B cell (primary cell): ENCODE measurements at regions of chr2 and their contacts with region 1.

Region 1: DNA sequence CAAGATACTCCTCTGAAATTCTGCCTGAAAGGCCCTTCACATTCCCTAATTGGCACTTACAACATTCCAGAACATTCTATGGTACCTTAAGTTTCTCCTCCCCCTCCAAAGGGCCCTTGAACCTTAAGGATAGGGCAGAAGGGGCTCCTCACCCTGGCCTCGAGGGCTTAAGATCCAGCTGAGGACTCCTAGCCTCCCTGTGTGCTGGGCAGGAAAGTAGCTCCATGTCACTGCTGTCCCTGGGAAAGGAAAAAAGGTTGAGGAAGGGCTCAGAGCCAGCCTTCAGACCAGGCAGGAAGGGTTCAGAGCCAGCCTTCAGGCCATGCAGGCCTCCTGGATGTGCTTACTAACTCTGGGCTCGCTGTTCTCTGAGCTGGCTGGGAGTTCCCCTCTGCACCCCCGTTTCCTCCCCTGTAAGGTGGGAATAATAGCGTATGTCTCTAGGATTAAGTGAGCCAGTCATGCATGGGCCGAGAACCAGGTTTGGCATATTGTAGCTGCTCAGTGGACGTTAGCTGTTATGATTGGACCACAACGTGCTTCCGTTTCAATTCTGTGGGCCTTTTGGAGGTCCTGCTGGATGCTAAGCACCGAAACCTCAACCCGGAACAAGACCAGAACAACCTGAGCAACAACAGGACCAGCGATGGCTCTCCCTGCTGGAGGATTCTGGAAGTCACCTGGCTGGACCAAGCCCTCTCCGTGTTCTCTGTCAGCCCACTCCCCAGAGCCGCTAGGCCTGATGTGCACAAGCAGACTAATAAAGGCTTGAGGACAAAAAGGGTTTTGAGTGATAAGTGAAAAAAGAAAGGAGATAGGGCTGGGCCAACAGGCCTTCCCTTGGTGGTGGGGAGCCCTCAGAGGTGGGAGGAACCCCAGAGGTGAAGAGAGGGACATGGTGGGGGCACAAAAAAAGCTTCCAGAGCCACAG is 1.0 kb upstream of the B3GNT7 start:
- DNase-seq: peak; percentile 88
- ATAC-seq: peak; percentile 40
- H3K4me3 ChIP-seq: peak overlapping the region; percentile 48 to 85 (median 66)
- H3K4me3 Mint-ChIP-seq: peak overlapping the region; percentile 99
- H3K27ac ChIP-seq: peak overlapping the region; percentile 97
- H3K27ac Mint-ChIP-seq: peak overlapping the region; percentile 100
- H3K4me1 ChIP-seq: peaks cover 47 to 65% of the 10 kb centered on the region in 2 donors
- H3K4me1 Mint-ChIP-seq: peaks cover 64% of the 10 kb centered on the region
- H3K27me3 ChIP-seq: no peaks in the 10 kb centered on the region
- H3K27me3 Mint-ChIP-seq: no peaks in the 10 kb centered on the region
- CTCF ChIP-seq: peak; percentile 60

Region 2: GRCh38 chr2:230924470-230925341 is 469.8 kb before region 1 on chr2 and contains the start of gene GPR55:
- CTCF ChIA-PET with region 1: no interaction called
- POLR2A ChIA-PET with region 1: no interaction called
- intact Hi-C with region 1: no loop called
- DNase-seq: peak; percentile 64
- ATAC-seq: peak; percentile 74
- H3K4me3 ChIP-seq: peak within 1 kb of the TSS in 4 of 5 experiments; percentile 39 to 60 (median 50)
- H3K4me3 Mint-ChIP-seq: peak within 1 kb of the TSS; percentile 85
- H3K27ac ChIP-seq: peak within 1 kb of the TSS; percentile 12 to 42
- H3K27ac Mint-ChIP-seq: peak within 1 kb of the TSS; percentile 85
- H3K4me1 ChIP-seq: peaks cover 3 to 24% of the 10 kb centered on the region in 2 donors
- H3K4me1 Mint-ChIP-seq: peaks cover 22% of the 10 kb centered on the region
- H3K27me3 ChIP-seq: peaks cover 0 to 4% (median 0%) of the 10 kb centered on the region in 4 experiments
- H3K27me3 Mint-ChIP-seq: no peaks in the 10 kb centered on the region
- CTCF ChIP-seq: peak; percentile 29
- total RNA-seq, gene GPR55: 4.1 and 4.7 TPM in 2 replicates

Region 3: GRCh38 chr2:231227309-231228162 is 166.9 kb before region 1 on chr2:
- CTCF ChIA-PET with region 1: interaction called, 325 read pairs
- POLR2A ChIA-PET with region 1: interaction called, 4 read pairs
- intact Hi-C with region 1: loop called (anchors 5 kb)
- DNase-seq: peak; percentile 80
- ATAC-seq: peak; percentile 77
- H3K4me3 ChIP-seq: no peak overlapping the region
- H3K4me3 Mint-ChIP-seq: no peak overlapping the region
- H3K27ac ChIP-seq: no peak overlapping the region
- H3K27ac Mint-ChIP-seq: peak overlapping the region; percentile 69
- H3K4me1 ChIP-seq: peaks cover 18 to 22% of the 10 kb centered on the region in 2 donors
- H3K4me1 Mint-ChIP-seq: peaks cover 23% of the 10 kb centered on the region
- H3K27me3 ChIP-seq: no peaks in the 10 kb centered on the region
- H3K27me3 Mint-ChIP-seq: no peaks in the 10 kb centered on the region
- CTCF ChIP-seq: peak; percentile 85

Region 4: GRCh38 chr2:231297108-231297908 is 97.2 kb before region 1 on chr2:
- CTCF ChIA-PET with region 1: interaction called, 149 read pairs
- POLR2A ChIA-PET with region 1: interaction called, 3 read pairs
- intact Hi-C with region 1: loop called (anchors 1 kb)
- DNase-seq: peak; percentile 68
- ATAC-seq: peak; percentile 62
- H3K4me3 ChIP-seq: no peak overlapping the region
- H3K4me3 Mint-ChIP-seq: no peak overlapping the region
- H3K27ac ChIP-seq: no peak overlapping the region
- H3K27ac Mint-ChIP-seq: no peak overlapping the region
- H3K4me1 ChIP-seq: peaks cover 30 to 56% of the 10 kb centered on the region in 2 donors
- H3K4me1 Mint-ChIP-seq: peaks cover 56% of the 10 kb centered on the region
- H3K27me3 ChIP-seq: no peaks in the 10 kb centered on the region
- H3K27me3 Mint-ChIP-seq: no peaks in the 10 kb centered on the region
- CTCF ChIP-seq: peak; percentile 76

Region 5: GRCh38 chr2:231321556-231322334 is 72.7 kb before region 1 on chr2:
- CTCF ChIA-PET with region 1: interaction called, 3 read pairs
- POLR2A ChIA-PET with region 1: no interaction called
- intact Hi-C with region 1: loop called (anchors 5 kb)
- DNase-seq: peak; percentile 74
- ATAC-seq: peak; percentile 78
- H3K4me3 ChIP-seq: peak overlapping the region in 3 of 5 experiments; percentile 16 to 49 (median 32)
- H3K4me3 Mint-ChIP-seq: peak overlapping the region; percentile 81
- H3K27ac ChIP-seq: no peak overlapping the region
- H3K27ac Mint-ChIP-seq: peak overlapping the region; percentile 60
- H3K4me1 ChIP-seq: peaks cover 22 to 33% of the 10 kb centered on the region in 2 donors
- H3K4me1 Mint-ChIP-seq: peaks cover 38% of the 10 kb centered on the region
- H3K27me3 ChIP-seq: no peaks in the 10 kb centered on the region
- H3K27me3 Mint-ChIP-seq: no peaks in the 10 kb centered on the region
- CTCF ChIP-seq: no peak

Region 6: DNA sequence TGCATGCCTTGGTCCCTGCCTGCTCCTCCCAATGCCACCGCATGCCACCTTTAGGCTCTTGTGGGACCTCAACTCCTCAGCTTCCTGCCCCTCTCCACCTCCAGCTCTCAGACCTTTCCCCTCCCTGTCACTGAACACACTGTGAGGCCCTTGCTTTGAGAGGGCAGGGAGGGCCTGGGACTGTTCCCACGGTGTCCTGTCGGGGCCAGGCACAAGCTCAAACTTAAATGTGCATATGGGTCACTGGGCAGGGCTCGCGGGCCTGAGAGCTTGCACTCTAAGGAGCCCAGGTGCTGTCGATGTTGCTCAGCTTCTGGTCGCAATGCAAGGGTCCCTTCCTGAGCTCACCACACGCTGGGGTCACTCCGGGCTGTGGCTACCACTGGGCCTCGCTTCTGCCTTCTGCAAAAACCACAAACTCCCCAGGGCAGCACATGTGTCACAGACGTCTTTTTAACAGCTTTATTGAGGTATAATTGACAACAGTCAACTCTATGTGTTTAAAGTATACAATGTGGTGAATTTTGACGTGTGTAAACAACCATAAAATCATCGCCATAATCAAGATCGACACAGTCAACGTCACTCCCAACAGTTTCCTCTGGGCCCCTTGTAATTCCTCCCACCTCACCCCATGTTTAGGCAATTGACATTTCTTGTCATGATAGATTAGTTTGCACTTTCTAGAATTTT is 10.9 kb before region 1 on chr2:
- CTCF ChIA-PET with region 1: interaction called, 10 read pairs
- POLR2A ChIA-PET with region 1: no interaction called
- intact Hi-C with region 1: no loop called
- DNase-seq: no peak
- ATAC-seq: no peak
- H3K4me3 ChIP-seq: no peak overlapping the region
- H3K4me3 Mint-ChIP-seq: no peak overlapping the region
- H3K27ac ChIP-seq: no peak overlapping the region
- H3K27ac Mint-ChIP-seq: no peak overlapping the region
- H3K4me1 ChIP-seq: peaks cover 0 to 5% of the 10 kb centered on the region in 2 donors
- H3K4me1 Mint-ChIP-seq: peaks cover 2% of the 10 kb centered on the region
- H3K27me3 ChIP-seq: no peaks in the 10 kb centered on the region
- H3K27me3 Mint-ChIP-seq: peaks cover 3% of the 10 kb centered on the region
- CTCF ChIP-seq: no peak

Region 7: DNA sequence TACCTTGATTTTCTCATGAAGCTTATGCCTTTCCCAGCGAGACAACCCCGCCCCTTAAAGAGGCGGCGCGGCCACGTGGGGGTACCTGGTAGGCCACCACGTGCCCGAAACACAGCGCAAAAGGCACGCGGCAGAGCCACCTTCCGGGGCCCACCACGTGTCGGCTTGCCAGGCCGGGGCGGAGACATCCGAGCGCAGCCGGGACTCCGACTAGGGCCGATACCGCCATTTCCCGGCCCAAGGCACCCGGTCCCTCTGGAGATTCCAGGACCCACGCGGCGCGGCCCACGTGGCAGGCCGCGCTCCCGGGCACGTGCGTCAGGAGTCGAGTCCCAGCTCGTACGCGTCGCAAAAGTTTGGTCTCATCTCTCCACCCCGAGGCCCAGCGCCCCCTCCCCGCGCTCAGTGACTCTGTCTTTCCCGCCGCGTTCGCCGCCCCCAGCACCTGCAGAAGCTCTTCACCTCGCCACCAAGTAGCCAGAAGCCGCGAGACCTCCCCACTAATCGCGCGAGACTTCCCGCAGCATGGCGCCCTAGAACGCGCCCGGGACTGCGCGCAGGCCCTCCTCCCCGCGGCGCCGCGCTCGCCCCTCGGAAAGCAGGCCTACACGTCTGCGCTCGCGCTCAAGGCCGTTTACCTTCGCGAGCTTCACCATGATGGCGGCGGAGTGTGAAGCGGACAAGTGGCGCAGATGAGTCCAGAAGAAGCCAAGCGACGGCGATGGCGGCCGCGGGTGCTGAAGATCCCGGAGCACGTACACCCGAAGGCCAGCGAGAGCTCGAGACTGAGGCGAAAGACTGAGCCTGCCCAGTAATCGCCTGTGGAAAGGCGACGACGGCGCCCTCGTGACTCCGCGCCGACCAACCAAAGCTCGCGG is 69.5 kb after region 1 on chr2 and contains the start of gene NCL:
- CTCF ChIA-PET with region 1: no interaction called
- POLR2A ChIA-PET with region 1: interaction called, 7 read pairs
- intact Hi-C with region 1: loop called (anchors 5 kb)
- DNase-seq: peak; percentile 98
- ATAC-seq: peak; percentile 51
- H3K4me3 ChIP-seq: peak within 1 kb of the TSS; percentile 62 to 97 (median 93)
- H3K4me3 Mint-ChIP-seq: peak within 1 kb of the TSS; percentile 99
- H3K27ac ChIP-seq: peak within 1 kb of the TSS; percentile 97 to 98
- H3K27ac Mint-ChIP-seq: peak within 1 kb of the TSS; percentile 100
- H3K4me1 ChIP-seq: peaks cover 29 to 33% of the 10 kb centered on the region in 2 donors
- H3K4me1 Mint-ChIP-seq: peaks cover 46% of the 10 kb centered on the region
- H3K27me3 ChIP-seq: no peaks in the 10 kb centered on the region
- H3K27me3 Mint-ChIP-seq: no peaks in the 10 kb centered on the region
- CTCF ChIP-seq: no peak
- total RNA-seq, gene NCL: 383 and 439 TPM in 2 replicates

Region 8: GRCh38 chr2:231475965-231476364 is 81.5 kb after region 1 on chr2:
- CTCF ChIA-PET with region 1: no interaction called
- POLR2A ChIA-PET with region 1: no interaction called
- intact Hi-C with region 1: no loop called
- DNase-seq: no peak
- ATAC-seq: no peak
- H3K4me3 ChIP-seq: no peak overlapping the region
- H3K4me3 Mint-ChIP-seq: no peak overlapping the region
- H3K27ac ChIP-seq: no peak overlapping the region
- H3K27ac Mint-ChIP-seq: no peak overlapping the region
- H3K4me1 ChIP-seq: no peaks in the 10 kb centered on the region
- H3K4me1 Mint-ChIP-seq: no peaks in the 10 kb centered on the region
- H3K27me3 ChIP-seq: no peaks in the 10 kb centered on the region
- H3K27me3 Mint-ChIP-seq: no peaks in the 10 kb centered on the region
- CTCF ChIP-seq: no peak

Region 9: DNA sequence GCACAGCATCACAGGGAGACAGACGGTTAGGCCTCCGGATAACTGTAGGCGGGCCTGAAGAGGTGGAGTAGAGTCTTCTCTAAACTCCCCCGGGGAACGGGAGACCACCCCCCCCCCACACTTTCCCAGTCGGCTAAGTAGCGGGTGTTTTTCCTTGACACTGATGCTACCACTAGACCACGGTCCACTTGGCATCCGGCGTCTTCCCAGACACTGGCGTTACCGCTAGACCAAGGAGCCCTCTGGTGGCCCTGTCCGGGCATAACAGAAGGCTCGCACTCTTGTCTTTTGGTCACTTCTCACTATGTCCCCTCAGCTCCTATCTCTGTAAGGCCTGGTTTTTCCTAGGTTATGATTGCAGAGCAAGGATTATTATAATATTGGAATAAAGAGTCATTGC is 95.5 kb after region 1 on chr2:
- CTCF ChIA-PET with region 1: no interaction called
- POLR2A ChIA-PET with region 1: no interaction called
- intact Hi-C with region 1: no loop called
- DNase-seq: no peak
- ATAC-seq: no peak
- H3K4me3 ChIP-seq: no peak overlapping the region
- H3K4me3 Mint-ChIP-seq: no peak overlapping the region
- H3K27ac ChIP-seq: no peak overlapping the region
- H3K27ac Mint-ChIP-seq: no peak overlapping the region
- H3K4me1 ChIP-seq: no peaks in the 10 kb centered on the region
- H3K4me1 Mint-ChIP-seq: no peaks in the 10 kb centered on the region
- H3K27me3 ChIP-seq: no peaks in the 10 kb centered on the region
- H3K27me3 Mint-ChIP-seq: no peaks in the 10 kb centered on the region
- CTCF ChIP-seq: no peak

Region 10: DNA sequence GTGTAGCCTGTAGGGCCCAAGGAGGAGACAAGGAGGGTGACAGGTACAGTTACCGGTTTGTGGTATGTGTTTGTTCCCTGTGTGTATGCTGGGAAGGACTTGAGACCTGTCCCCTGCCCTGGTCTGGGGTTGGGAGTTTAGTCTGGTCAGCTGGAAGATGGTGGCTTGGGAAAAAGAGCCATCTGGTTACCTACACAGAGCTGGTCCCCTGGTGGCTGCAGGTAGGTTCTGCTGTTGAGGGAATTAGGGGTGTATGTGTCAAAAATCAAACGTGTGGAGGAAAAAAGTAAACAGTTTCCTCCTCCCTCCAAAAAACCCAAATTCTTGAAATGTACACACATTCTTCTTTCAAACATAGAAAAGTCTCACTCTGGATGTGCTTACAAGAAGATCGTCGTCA is 338.1 kb after region 1 on chr2:
- CTCF ChIA-PET with region 1: no interaction called
- POLR2A ChIA-PET with region 1: no interaction called
- intact Hi-C with region 1: no loop called
- DNase-seq: no peak
- ATAC-seq: no peak
- H3K4me3 ChIP-seq: no peak overlapping the region
- H3K4me3 Mint-ChIP-seq: no peak overlapping the region
- H3K27ac ChIP-seq: no peak overlapping the region
- H3K27ac Mint-ChIP-seq: no peak overlapping the region
- H3K4me1 ChIP-seq: no peaks in the 10 kb centered on the region
- H3K4me1 Mint-ChIP-seq: no peaks in the 10 kb centered on the region
- H3K27me3 ChIP-seq: no peaks in the 10 kb centered on the region
- H3K27me3 Mint-ChIP-seq: no peaks in the 10 kb centered on the region
- CTCF ChIP-seq: no peak